ENCODE measurements at regions of chr11 and their contacts with region 1.

Region 1: GRCh38 chr11:34357701-34358257 is at the start of gene ABTB2:
- DNase-seq: peak; percentile 100
- H3K4me3 ChIP-seq: peak within 1 kb of the TSS; percentile 71
- H3K27ac ChIP-seq: peak within 1 kb of the TSS; percentile 54
- H3K4me1 ChIP-seq: peaks cover 43% of the 10 kb centered on the region
- H3K27me3 ChIP-seq: no peaks in the 10 kb centered on the region
- CTCF ChIP-seq: no peak
- total RNA-seq, gene ABTB2: 40.7 and 46.3 TPM in 2 replicates

Region 2: GRCh38 chr11:33835143-33835878 is 522.5 kb before region 1 on chr11:
- CTCF ChIA-PET with region 1: interaction called, 4 read pairs
- POLR2A ChIA-PET with region 1: no interaction called
- intact Hi-C with region 1: loop called (anchors 1 kb)
- DNase-seq: peak; percentile 89
- H3K4me3 ChIP-seq: peak overlapping the region; percentile 24
- H3K27ac ChIP-seq: peak overlapping the region; percentile 57
- H3K4me1 ChIP-seq: peaks cover 39% of the 10 kb centered on the region
- H3K27me3 ChIP-seq: no peaks in the 10 kb centered on the region
- CTCF ChIP-seq: peak; percentile 86

Region 3: DNA sequence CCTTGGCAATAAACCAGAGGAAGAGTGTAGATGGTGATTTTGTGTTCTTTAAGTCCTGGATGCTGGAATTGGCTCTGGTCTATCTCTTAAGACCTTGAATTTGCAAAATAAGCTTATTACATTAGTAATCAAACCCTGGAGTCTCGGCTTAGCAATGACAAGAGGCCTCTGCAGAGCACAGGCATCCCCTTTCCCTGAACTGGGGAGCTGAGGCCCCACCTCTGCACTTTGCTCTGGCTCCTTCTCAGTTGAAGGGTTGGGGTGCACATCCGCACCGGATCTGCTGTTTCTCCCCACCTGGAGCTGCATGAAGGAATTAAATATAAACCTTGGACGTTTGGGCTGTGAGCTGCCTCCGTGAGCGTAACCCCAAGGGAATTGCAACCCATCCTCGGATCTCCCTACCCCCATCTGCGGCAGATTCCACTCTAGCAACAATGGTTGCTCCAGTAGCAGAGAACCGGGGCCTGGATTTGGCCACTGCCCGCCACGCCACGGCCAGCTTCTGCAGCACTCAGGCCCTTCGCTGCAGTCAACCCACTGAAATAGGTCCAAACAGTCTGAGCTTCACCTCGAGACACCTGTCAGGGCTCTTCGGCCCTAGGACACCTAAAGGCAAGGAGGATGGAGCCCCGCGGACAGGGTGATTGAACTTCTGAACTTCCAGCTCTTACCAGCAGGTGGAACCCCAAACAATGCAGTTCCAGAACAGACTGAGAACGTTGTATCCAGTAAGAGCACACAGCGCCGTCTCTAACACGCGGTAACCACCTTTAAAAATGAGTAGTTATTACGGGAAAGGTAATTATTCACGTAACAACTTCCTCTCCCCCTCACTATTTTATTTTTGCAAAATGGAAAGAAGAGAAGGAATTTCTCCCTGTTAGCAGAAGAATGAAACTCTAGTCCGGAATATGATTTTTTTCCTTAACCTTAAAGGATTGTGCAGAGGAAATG is 361.0 kb before region 1 on chr11:
- CTCF ChIA-PET with region 1: no interaction called
- POLR2A ChIA-PET with region 1: no interaction called
- intact Hi-C with region 1: loop called (anchors 1 kb)
- DNase-seq: peak; percentile 96
- H3K4me3 ChIP-seq: peak overlapping the region; percentile 17
- H3K27ac ChIP-seq: peak overlapping the region; percentile 69
- H3K4me1 ChIP-seq: peaks cover 46% of the 10 kb centered on the region
- H3K27me3 ChIP-seq: no peaks in the 10 kb centered on the region
- CTCF ChIP-seq: peak; percentile 100

Region 4: DNA sequence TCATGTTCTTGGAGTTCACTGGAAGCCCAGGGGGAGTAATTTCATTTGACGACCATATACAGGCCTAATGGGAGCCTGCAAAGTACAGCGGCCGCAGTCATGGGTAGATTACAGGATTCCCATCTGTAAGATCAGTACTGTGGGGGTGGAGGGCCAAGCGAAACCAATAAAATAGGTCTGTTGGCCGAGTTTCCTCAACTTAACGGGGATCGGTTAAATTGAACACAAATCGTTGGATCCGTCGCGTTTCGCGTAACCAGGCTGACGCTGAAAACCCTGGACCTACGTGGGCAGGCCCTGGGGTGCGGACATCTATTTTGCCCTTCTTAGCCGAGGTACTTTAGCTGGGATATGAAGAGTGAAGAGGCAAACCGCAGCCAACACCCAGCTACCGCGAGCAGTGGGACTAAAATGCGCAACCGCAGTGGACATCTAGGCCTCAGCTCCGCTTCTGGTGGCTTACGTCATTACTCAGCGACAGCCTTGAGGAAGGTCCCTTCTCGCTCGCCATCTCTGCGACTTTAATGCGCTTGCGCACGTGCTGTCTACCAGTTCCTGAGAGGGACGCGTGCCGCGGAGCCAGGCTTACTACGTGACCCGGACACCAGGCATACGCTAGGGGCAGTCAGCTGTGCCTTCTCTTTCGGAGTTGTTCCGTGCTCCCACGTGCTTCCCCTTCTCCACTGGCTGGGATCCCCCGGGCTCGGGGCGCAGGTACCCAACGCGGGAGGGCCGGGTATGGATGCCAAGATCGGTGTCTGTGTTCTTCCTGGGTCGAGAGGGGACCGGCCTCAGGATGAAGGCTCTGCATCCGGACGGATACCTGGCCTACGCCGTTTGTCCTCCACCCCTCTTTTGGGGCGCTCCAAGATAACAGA is 252.5 kb before region 1 on chr11 and contains the start of gene NAT10:
- CTCF ChIA-PET with region 1: no interaction called
- POLR2A ChIA-PET with region 1: no interaction called
- intact Hi-C with region 1: loop called (anchors 1 kb)
- DNase-seq: peak; percentile 100
- H3K4me3 ChIP-seq: peak within 1 kb of the TSS; percentile 55
- H3K27ac ChIP-seq: peak within 1 kb of the TSS; percentile 93
- H3K4me1 ChIP-seq: peaks cover 42% of the 10 kb centered on the region
- H3K27me3 ChIP-seq: no peaks in the 10 kb centered on the region
- CTCF ChIP-seq: peak; percentile 30; the same call in 1 of the 2 replicates
- total RNA-seq, gene NAT10: 180 and 192 TPM in 2 replicates

Region 5: DNA sequence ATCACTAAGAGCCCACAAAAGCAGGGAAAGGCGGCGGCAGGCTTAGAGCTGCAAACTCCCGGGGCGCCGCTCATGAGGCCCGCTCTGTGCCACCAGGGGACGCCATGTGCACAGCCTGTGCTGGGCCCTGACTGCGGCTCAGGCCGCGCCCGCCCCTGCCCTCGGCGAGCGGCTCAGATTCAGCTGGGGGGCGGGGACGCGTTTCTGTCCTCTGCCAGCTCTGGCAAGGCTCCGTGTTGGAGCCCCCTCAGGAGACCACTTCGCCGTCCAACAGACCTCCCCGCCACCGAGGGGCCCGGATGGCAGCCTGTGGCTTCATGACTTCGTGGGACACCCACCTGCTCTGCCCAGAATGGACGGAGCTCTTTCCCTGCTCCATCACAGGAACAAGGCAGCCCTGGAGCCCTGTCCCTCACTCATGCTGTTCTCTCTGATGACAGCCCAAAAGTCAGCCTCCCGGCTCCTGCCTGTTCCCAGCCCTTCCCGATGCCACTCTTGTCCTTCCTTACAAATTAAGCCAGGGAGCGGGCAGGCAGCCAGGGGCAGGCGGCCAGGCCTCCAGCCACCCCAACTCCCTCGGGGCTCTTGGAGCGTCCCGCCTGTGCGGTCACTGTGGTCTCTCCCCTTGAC is 183.3 kb before region 1 on chr11:
- CTCF ChIA-PET with region 1: interaction called, 80 read pairs
- POLR2A ChIA-PET with region 1: interaction called, 3 read pairs
- intact Hi-C with region 1: loop called (anchors 1 kb)
- DNase-seq: peak; percentile 95
- H3K4me3 ChIP-seq: peak overlapping the region; percentile 37
- H3K27ac ChIP-seq: no peak overlapping the region
- H3K4me1 ChIP-seq: peaks cover 20% of the 10 kb centered on the region
- H3K27me3 ChIP-seq: no peaks in the 10 kb centered on the region
- CTCF ChIP-seq: peak; percentile 99

Region 6: GRCh38 chr11:34475656-34476055 is 117.9 kb after region 1 on chr11:
- CTCF ChIA-PET with region 1: no interaction called
- POLR2A ChIA-PET with region 1: interaction called, 13 read pairs
- intact Hi-C with region 1: no loop called
- DNase-seq: no peak
- H3K4me3 ChIP-seq: no peak overlapping the region
- H3K27ac ChIP-seq: no peak overlapping the region
- H3K4me1 ChIP-seq: no peaks in the 10 kb centered on the region
- H3K27me3 ChIP-seq: peaks cover 8% of the 10 kb centered on the region
- CTCF ChIP-seq: no peak

Measured in A673 (cell line).